Calu3 (cell line): ENCODE measurements at regions of chr16 and their contacts with region 1.

Region 1: GRCh38 chr16:19432429-19432828 is 14.7 kb downstream of the TMC5 start:
- DNase-seq: peak; percentile 78
- H3K4me3 Mint-ChIP-seq: peak overlapping the region; percentile 57
- H3K27ac Mint-ChIP-seq: peak overlapping the region; percentile 100
- H3K4me1 Mint-ChIP-seq: peaks cover 85% of the 10 kb centered on the region
- H3K27me3 Mint-ChIP-seq: no peaks in the 10 kb centered on the region
- CTCF ChIP-seq: no peak

Region 2: GRCh38 chr16:19105891-19106624 is 326.4 kb before region 1 on chr16:
- CTCF ChIA-PET with region 1: interaction called, 6 read pairs
- intact Hi-C with region 1: loop called (anchors 5 kb)
- DNase-seq: no peak
- H3K4me3 Mint-ChIP-seq: no peak overlapping the region
- H3K27ac Mint-ChIP-seq: no peak overlapping the region
- H3K4me1 Mint-ChIP-seq: peaks cover 32% of the 10 kb centered on the region
- H3K27me3 Mint-ChIP-seq: no peaks in the 10 kb centered on the region
- CTCF ChIP-seq: no peak

Region 3: GRCh38 chr16:19382887-19383816 is 49.3 kb before region 1 on chr16:
- CTCF ChIA-PET with region 1: interaction called, 5 read pairs
- intact Hi-C with region 1: loop called (anchors 1 kb)
- DNase-seq: peak; percentile 69
- H3K4me3 Mint-ChIP-seq: peak overlapping the region; percentile 2
- H3K27ac Mint-ChIP-seq: peak overlapping the region; percentile 5
- H3K4me1 Mint-ChIP-seq: peaks cover 55% of the 10 kb centered on the region
- H3K27me3 Mint-ChIP-seq: no peaks in the 10 kb centered on the region
- CTCF ChIP-seq: no peak

Region 4: GRCh38 chr16:19389246-19389645 is 43.2 kb before region 1 on chr16:
- CTCF ChIA-PET with region 1: interaction called, 12 read pairs
- intact Hi-C with region 1: no loop called
- DNase-seq: peak; percentile 69
- H3K4me3 Mint-ChIP-seq: no peak overlapping the region
- H3K27ac Mint-ChIP-seq: no peak overlapping the region
- H3K4me1 Mint-ChIP-seq: peaks cover 41% of the 10 kb centered on the region
- H3K27me3 Mint-ChIP-seq: no peaks in the 10 kb centered on the region
- CTCF ChIP-seq: peak; percentile 61

Region 5: DNA sequence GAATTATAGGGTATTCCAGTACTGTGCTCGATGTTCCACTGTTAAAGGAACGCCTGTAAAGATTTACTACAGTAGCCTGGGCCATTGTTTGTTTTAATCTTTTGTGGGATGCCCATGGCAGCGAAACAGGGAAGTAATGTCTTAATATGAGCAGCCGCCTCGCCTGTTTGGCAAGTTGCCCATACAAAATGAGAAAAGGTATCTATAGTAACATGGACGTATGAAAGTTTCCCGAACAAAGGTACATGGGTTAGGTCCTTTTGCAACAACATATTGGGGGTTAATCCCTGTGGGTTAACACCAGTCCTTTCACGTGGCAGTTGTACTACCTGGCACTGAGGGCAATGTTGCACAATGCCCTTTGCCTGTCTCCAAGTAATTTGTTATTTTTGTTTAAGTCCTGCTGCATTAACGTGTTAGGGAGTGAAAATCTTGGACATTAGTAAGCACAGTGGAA is 35.8 kb before region 1 on chr16:
- CTCF ChIA-PET with region 1: interaction called, 12 read pairs
- intact Hi-C with region 1: loop called (anchors 1 kb)
- DNase-seq: peak; percentile 80
- H3K4me3 Mint-ChIP-seq: peak overlapping the region; percentile 57
- H3K27ac Mint-ChIP-seq: peak overlapping the region; percentile 95
- H3K4me1 Mint-ChIP-seq: peaks cover 51% of the 10 kb centered on the region
- H3K27me3 Mint-ChIP-seq: no peaks in the 10 kb centered on the region
- CTCF ChIP-seq: no peak

Region 6: GRCh38 chr16:19419691-19420060 is 12.8 kb before region 1 on chr16:
- CTCF ChIA-PET with region 1: interaction called, 44 read pairs
- intact Hi-C with region 1: loop called (anchors 1 kb)
- DNase-seq: peak; percentile 76
- H3K4me3 Mint-ChIP-seq: peak overlapping the region; percentile 83
- H3K27ac Mint-ChIP-seq: peak overlapping the region; percentile 96
- H3K4me1 Mint-ChIP-seq: peaks cover 77% of the 10 kb centered on the region
- H3K27me3 Mint-ChIP-seq: no peaks in the 10 kb centered on the region
- CTCF ChIP-seq: no peak

Region 7: GRCh38 chr16:19502395-19503131 is 70.1 kb after region 1 on chr16:
- CTCF ChIA-PET with region 1: interaction called, 5 read pairs
- intact Hi-C with region 1: loop called (anchors 5 kb)
- DNase-seq: peak; percentile 88
- H3K4me3 Mint-ChIP-seq: no peak overlapping the region
- H3K27ac Mint-ChIP-seq: no peak overlapping the region
- H3K4me1 Mint-ChIP-seq: peaks cover 15% of the 10 kb centered on the region
- H3K27me3 Mint-ChIP-seq: no peaks in the 10 kb centered on the region
- CTCF ChIP-seq: peak; percentile 79